Activated CD8-positive, alpha-beta memory T cell treated with anti-CD3 and anti-CD28 coated beads, Interleukin-2, amount 10 ng/mL, durations not matched to agents 7 days and 5 days (primary cell): ENCODE measurements at regions of chr5 and their contacts with region 1.

Region 1: GRCh38 chr5:134758504-134759341 is at the start of gene DDX46:
- DNase-seq: peak; percentile 96
- ATAC-seq: peak; percentile 99
- H3K4me3 Mint-ChIP-seq: peak within 1 kb of the TSS; percentile 100
- H3K27ac Mint-ChIP-seq: peak within 1 kb of the TSS; percentile 94
- H3K4me1 Mint-ChIP-seq: peaks cover 37% of the 10 kb centered on the region
- H3K27me3 Mint-ChIP-seq: no peaks in the 10 kb centered on the region
- total RNA-seq, gene DDX46: 75.9 to 77.0 TPM

Region 2: DNA sequence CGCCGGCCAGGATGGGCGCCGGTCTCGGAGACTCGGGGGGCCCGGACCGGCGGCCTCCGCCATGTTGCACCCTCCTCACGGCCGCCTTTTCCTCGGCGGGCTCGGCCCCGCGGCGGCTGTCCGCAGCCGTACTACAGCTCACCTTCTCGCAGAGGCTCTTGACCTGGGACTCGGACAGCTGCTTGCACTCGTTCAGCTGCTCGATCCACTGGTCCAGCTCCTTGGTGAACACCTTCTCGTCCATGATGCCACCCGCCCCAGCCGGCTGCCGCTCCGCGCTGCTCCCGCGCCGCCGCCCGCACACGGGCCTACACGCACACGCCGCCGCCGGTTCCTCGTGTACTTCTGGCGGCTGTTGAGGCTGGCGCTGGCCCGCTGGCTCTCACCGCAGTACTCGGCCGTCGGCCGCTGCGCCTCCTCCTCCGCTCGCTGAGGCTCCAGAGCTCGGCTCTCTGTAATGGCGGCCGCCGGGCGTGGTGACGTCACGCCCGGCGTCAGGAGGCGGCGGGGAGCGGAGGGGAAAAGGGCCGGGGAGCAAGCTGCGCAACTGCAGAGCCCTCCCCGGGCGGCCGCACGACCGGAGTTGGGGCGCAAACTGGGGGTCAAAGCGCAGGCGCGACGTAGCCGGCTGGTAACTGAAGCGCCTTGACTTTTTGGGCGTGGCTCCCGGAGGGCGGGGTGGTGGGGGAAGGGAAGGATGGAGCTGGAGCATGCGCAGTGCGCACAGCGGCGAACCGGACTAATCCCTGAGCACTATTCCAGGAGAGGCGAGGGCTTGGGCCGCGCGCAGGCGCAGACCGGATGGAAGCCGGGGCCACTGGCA is 532.9 kb before region 1 on chr5 and contains the start of gene PPP2CA:
- CTCF ChIA-PET with region 1: no interaction called
- DNase-seq: peak; percentile 99
- ATAC-seq: peak; percentile 87
- H3K4me3 Mint-ChIP-seq: peak within 1 kb of the TSS; percentile 96
- H3K27ac Mint-ChIP-seq: peak within 1 kb of the TSS; percentile 98
- H3K4me1 Mint-ChIP-seq: peaks cover 42% of the 10 kb centered on the region
- H3K27me3 Mint-ChIP-seq: no peaks in the 10 kb centered on the region
- total RNA-seq, gene PPP2CA: 123 to 194 TPM

Region 3: GRCh38 chr5:134477462-134478250 is 281.1 kb before region 1 on chr5:
- CTCF ChIA-PET with region 1: no interaction called
- DNase-seq: no peak
- ATAC-seq: no peak
- H3K4me3 Mint-ChIP-seq: no peak overlapping the region
- H3K27ac Mint-ChIP-seq: no peak overlapping the region
- H3K4me1 Mint-ChIP-seq: peaks cover 1% of the 10 kb centered on the region
- H3K27me3 Mint-ChIP-seq: peaks cover 4% of the 10 kb centered on the region

Region 4: DNA sequence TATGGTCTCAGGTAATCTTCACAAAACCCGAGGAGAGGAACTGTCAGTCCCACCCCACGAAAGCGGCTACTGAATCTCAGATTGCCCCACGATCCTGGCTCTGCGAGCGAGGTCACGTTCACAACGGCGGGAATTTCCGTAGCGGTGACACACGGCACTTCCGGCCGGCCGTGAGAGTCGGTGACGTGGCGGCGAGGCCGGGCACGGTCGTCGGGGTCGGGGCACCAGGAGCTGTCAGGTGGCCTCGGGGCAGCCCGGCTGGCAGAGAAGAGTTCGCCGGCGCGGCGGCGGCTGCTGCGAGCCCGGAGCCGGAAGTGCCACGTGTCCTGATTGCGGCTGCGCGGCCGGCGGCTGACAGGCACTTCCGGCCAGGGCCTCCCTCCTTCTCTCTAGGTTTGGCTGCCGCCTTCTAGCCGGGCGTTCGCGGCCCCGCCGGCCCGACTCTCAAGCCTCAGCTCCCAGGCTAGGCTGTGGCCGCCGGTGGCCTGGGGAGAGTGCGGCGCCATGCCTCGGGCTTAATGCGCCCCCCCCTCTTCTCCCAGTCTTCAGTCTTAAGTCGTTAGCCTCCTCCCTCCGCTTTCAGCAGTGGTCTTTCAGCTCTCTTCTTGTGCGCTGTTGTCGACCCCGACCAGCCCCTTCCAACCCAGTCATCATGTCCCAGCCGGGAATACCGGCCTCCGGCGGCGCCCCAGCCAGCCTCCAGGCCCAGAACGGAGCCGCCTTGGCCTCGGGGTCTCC is 110.1 kb before region 1 on chr5 and contains the start of gene SEC24A:
- CTCF ChIA-PET with region 1: no interaction called
- DNase-seq: peak; percentile 94
- ATAC-seq: peak; percentile 92
- H3K4me3 Mint-ChIP-seq: peak within 1 kb of the TSS; percentile 87
- H3K27ac Mint-ChIP-seq: peak within 1 kb of the TSS; percentile 96
- H3K4me1 Mint-ChIP-seq: peaks cover 28% of the 10 kb centered on the region
- H3K27me3 Mint-ChIP-seq: no peaks in the 10 kb centered on the region
- total RNA-seq, gene SEC24A: 19.8 to 25.2 TPM

Region 5: DNA sequence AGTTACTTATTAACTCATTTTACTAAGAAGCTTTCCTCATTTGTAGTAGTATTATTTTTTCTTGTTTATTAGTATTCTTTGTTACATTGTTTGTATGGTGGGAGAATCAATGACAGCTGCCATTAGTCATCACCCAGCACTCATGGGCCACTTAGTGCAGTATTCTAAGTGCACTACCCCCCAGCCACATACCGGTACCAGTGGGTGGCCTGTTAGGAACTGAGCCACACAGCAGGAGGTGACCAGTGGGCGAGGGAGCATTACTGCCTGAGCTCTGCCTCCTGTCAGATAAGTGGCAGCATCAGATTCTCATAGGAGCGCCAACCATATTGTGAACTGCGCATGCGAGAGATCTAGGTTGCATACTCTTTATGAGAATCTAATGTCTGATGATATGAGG is 44.6 kb before region 1 on chr5:
- CTCF ChIA-PET with region 1: no interaction called
- DNase-seq: no peak
- ATAC-seq: no peak
- H3K4me3 Mint-ChIP-seq: no peak overlapping the region
- H3K27ac Mint-ChIP-seq: no peak overlapping the region
- H3K4me1 Mint-ChIP-seq: no peaks in the 10 kb centered on the region
- H3K27me3 Mint-ChIP-seq: no peaks in the 10 kb centered on the region

Region 6: GRCh38 chr5:134738133-134738962 is 20.4 kb before region 1 on chr5 and contains the start of gene CAMLG:
- CTCF ChIA-PET with region 1: interaction called, 72 read pairs
- DNase-seq: peak; percentile 99
- ATAC-seq: peak; percentile 98
- H3K4me3 Mint-ChIP-seq: peak within 1 kb of the TSS; percentile 97
- H3K27ac Mint-ChIP-seq: peak within 1 kb of the TSS; percentile 91
- H3K4me1 Mint-ChIP-seq: peaks cover 29% of the 10 kb centered on the region
- H3K27me3 Mint-ChIP-seq: no peaks in the 10 kb centered on the region
- total RNA-seq, gene CAMLG: 20.4 to 28.4 TPM